ENCODE measurements at regions of chr19 and their contacts with region 1.

Region 1: GRCh38 chr19:8487137-8487851 is 15.1 kb downstream of the PRAM1 start:
- DNase-seq: no peak
- H3K4me3 ChIP-seq: no peak overlapping the region
- H3K27ac ChIP-seq: no peak overlapping the region
- H3K4me1 ChIP-seq: peaks cover 20% of the 10 kb centered on the region
- H3K27me3 ChIP-seq: no peaks in the 10 kb centered on the region
- CTCF ChIP-seq: no peak

Region 2: DNA sequence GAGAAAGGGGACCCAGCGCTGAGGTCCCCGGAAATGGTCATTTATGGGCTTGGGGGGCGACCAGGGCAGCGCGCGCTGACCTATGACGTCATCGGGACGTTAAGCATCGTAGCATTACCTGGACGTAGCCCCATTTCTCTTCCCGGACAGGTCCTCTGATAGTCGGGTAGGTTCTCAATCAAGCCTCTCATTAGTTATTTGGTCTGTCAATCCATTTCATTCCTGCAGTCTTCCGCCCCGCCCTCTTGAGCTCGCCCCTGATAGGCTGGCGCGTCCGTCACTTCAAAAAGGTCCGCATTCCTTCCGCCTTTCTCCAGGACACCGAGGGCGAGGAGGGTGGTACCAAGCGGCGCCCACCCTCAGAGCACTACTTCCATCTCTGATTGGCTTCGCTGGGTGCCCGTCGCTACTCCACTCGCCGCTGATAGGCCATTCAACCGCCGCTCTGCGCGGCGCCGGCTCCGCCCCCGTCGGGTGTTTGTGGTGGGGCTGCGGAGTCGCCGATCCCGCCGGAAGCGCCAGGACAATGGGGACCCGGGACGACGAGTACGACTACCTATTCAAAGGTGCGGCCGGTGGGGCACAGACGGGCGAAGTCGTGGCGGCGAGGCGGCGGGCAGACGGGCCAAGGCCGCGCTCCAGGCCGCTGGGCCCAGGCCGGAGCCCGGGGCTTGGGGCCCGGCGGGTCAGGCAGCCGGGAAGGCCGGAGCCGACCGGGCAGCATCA is 97.2 kb before region 1 on chr19 and contains the start of gene RAB11B:
- CTCF ChIA-PET with region 1: no interaction called
- dilution Hi-C with region 1: loop called (anchors 5 kb)
- in situ Hi-C with region 1: no loop called
- intact Hi-C with region 1: no loop called
- DNase-seq: peak; percentile 100
- H3K4me3 ChIP-seq: peak within 1 kb of the TSS; percentile 69 to 87 (median 80)
- H3K27ac ChIP-seq: peak within 1 kb of the TSS; percentile 93
- H3K4me1 ChIP-seq: peaks cover 25% of the 10 kb centered on the region
- H3K27me3 ChIP-seq: no peaks in the 10 kb centered on the region
- CTCF ChIP-seq: no peak
- total RNA-seq, gene RAB11B: 24.0 to 88.3 TPM

Region 3: GRCh38 chr19:8513687-8514504 is 26.6 kb after region 1 on chr19 and contains the start of gene ZNF414:
- CTCF ChIA-PET with region 1: no interaction called
- dilution Hi-C with region 1: no loop called
- in situ Hi-C with region 1: no loop called
- intact Hi-C with region 1: loop called (anchors 1 kb)
- DNase-seq: peak; percentile 97
- H3K4me3 ChIP-seq: peak within 1 kb of the TSS; percentile 62 to 88 (median 71)
- H3K27ac ChIP-seq: peak within 1 kb of the TSS; percentile 84
- H3K4me1 ChIP-seq: peaks cover 12% of the 10 kb centered on the region
- H3K27me3 ChIP-seq: no peaks in the 10 kb centered on the region
- CTCF ChIP-seq: no peak
- total RNA-seq, gene ZNF414: 3.5 to 23.2 TPM

Measured in mammary epithelial cell (primary cell).